Activated naive CD4-positive, alpha-beta T cell treated with anti-CD3 and anti-CD28 coated beads for 36 hours (primary cell): ENCODE measurements at regions of chr10 and their contacts with region 1.

Region 1: GRCh38 chr10:32318476-32318896 is 28.5 kb downstream of the EPC1 start:
- DNase-seq: peak; percentile 45
- H3K4me3 Mint-ChIP-seq: no peak overlapping the region
- H3K27ac Mint-ChIP-seq: peak overlapping the region; percentile 60
- H3K4me1 Mint-ChIP-seq: peaks cover 75% of the 10 kb centered on the region
- H3K27me3 Mint-ChIP-seq: no peaks in the 10 kb centered on the region

Region 2: DNA sequence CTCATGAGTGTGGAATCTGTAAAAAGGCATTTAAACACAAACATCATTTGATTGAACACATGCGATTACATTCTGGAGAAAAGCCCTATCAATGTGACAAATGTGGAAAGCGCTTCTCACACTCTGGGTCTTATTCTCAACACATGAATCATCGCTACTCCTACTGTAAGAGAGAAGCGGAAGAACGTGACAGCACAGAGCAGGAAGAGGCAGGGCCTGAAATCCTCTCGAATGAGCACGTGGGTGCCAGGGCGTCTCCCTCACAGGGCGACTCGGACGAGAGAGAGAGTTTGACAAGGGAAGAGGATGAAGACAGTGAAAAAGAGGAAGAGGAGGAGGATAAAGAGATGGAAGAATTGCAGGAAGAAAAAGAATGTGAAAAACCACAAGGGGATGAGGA is 791.8 kb before region 1 on chr10:
- CTCF ChIA-PET with region 1: no interaction called
- intact Hi-C with region 1: no loop called
- DNase-seq: no peak
- H3K4me3 Mint-ChIP-seq: no peak overlapping the region
- H3K27ac Mint-ChIP-seq: no peak overlapping the region
- H3K4me1 Mint-ChIP-seq: peaks cover 8% of the 10 kb centered on the region
- H3K27me3 Mint-ChIP-seq: no peaks in the 10 kb centered on the region

Region 3: GRCh38 chr10:32298054-32298812 is 20.3 kb before region 1 on chr10:
- CTCF ChIA-PET with region 1: interaction called, 3 read pairs
- intact Hi-C with region 1: loop called (anchors 2 kb)
- DNase-seq: no peak
- H3K4me3 Mint-ChIP-seq: peak overlapping the region; percentile 33
- H3K27ac Mint-ChIP-seq: peak overlapping the region; percentile 68
- H3K4me1 Mint-ChIP-seq: peaks cover 62% of the 10 kb centered on the region
- H3K27me3 Mint-ChIP-seq: no peaks in the 10 kb centered on the region

Region 4: DNA sequence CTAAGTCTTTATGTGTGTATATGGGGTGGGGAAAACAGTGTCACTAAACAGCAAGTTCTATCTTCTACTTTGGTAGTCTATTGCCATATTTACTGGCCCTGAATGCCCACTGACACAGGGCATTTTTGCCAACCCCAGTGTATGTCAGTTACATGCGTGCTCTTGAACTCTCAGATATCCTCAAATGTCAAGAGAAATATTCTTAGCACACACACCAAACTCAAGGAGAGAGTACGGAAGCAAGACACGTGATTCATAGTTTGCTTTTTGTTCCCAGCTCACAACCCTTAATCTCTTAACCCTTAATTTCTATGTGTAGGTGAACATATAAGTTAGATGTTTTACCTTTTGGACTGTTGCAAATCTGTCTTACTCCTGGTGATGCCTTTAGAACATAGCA is 10.9 kb before region 1 on chr10:
- CTCF ChIA-PET with region 1: interaction called, 9 read pairs
- intact Hi-C with region 1: loop called (anchors 1 kb)
- DNase-seq: no peak
- H3K4me3 Mint-ChIP-seq: no peak overlapping the region
- H3K27ac Mint-ChIP-seq: peak overlapping the region; percentile 23
- H3K4me1 Mint-ChIP-seq: peaks cover 54% of the 10 kb centered on the region
- H3K27me3 Mint-ChIP-seq: no peaks in the 10 kb centered on the region

Region 5: DNA sequence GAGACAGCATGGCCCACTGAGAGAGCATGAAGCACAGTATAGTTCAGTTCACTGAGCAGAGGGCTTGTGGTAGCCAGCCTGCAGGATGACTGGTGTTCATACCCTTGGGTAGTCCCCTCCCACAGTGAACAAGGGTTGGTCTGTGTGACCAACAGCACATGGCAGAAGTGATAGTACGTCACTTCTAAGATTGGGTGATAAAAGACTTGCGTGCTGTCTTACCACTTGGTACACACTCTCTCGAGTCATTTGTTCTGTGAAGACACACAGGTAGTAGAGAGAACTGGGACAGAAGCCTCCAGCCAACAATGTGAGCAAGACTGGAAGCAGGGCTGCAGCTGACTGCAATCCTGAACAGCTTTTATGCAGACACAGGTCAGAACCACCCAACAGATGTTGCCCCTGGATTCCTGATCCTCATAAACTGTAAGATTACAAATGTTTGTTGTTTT is 13.8 kb after region 1 on chr10:
- CTCF ChIA-PET with region 1: interaction called, 3 read pairs
- intact Hi-C with region 1: loop called (anchors 1 kb)
- DNase-seq: peak; percentile 89
- H3K4me3 Mint-ChIP-seq: peak overlapping the region; percentile 55
- H3K27ac Mint-ChIP-seq: peak overlapping the region; percentile 90
- H3K4me1 Mint-ChIP-seq: peaks cover 94% of the 10 kb centered on the region
- H3K27me3 Mint-ChIP-seq: no peaks in the 10 kb centered on the region

Region 6: GRCh38 chr10:33125522-33126517 is 807.3 kb after region 1 on chr10:
- CTCF ChIA-PET with region 1: no interaction called
- intact Hi-C with region 1: loop called (anchors 5 kb)
- DNase-seq: peak; percentile 67
- H3K4me3 Mint-ChIP-seq: no peak overlapping the region
- H3K27ac Mint-ChIP-seq: peak overlapping the region; percentile 64
- H3K4me1 Mint-ChIP-seq: peaks cover 64% of the 10 kb centered on the region
- H3K27me3 Mint-ChIP-seq: peaks cover 6% of the 10 kb centered on the region